ENCODE measurements at regions of chr17 and their contacts with region 1.

Region 1: GRCh38 chr17:39908789-39909352 is 9.6 kb downstream of the GSDMB start:
- DNase-seq: no peak
- H3K27ac ChIP-seq: no peak overlapping the region
- CTCF ChIP-seq: no peak

Region 2: GRCh38 chr17:39923836-39924690 is 15.2 kb after region 1 on chr17:
- CTCF ChIA-PET with region 1: interaction called, 3 read pairs
- POLR2A ChIA-PET with region 1: interaction called, 15 read pairs
- DNase-seq: no peak
- H3K27ac ChIP-seq: peak overlapping the region; percentile 24; the same call in 1 of the 2 replicates
- CTCF ChIP-seq: no peak

Region 3: DNA sequence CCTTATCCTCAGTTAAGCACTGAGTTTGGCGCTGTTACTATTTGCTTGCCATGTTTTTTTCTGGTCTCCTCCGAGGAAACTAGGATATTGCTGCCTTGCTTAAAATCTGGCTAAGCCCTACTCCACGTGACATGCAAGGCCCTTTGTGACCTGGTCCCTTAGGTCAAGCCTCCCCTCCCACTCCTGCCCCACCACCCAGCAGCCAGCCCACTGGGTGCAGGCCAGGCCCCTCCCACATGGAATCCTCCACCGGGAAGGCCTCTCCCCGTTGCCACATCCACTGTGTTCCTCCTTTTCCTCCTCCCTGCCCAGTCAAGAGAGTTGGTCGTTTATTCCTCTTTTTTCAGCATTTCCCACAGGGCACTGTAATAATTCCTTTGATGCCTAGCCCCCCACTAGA is 87.9 kb after region 1 on chr17:
- CTCF ChIA-PET with region 1: no interaction called
- POLR2A ChIA-PET with region 1: no interaction called
- DNase-seq: no peak
- H3K27ac ChIP-seq: peak overlapping the region; percentile 40
- CTCF ChIP-seq: no peak